Activated B cell treated with CpG ODN at 0.5 μM for 24 hours (primary cell): ENCODE measurements at regions of chr9 and their contacts with region 1.

Region 1: GRCh38 chr9:131125128-131126058 is at the start of gene NUP214:
- DNase-seq: peak; percentile 100
- ATAC-seq: peak; percentile 99
- H3K4me3 Mint-ChIP-seq: peak within 1 kb of the TSS; percentile 98
- H3K27ac Mint-ChIP-seq: peak within 1 kb of the TSS; percentile 98
- H3K4me1 Mint-ChIP-seq: peaks cover 29% of the 10 kb centered on the region
- H3K27me3 Mint-ChIP-seq: no peaks in the 10 kb centered on the region
- CTCF ChIP-seq: no peak
- total RNA-seq, gene NUP214: 72.2 and 90.9 TPM in 2 replicates

Region 2: DNA sequence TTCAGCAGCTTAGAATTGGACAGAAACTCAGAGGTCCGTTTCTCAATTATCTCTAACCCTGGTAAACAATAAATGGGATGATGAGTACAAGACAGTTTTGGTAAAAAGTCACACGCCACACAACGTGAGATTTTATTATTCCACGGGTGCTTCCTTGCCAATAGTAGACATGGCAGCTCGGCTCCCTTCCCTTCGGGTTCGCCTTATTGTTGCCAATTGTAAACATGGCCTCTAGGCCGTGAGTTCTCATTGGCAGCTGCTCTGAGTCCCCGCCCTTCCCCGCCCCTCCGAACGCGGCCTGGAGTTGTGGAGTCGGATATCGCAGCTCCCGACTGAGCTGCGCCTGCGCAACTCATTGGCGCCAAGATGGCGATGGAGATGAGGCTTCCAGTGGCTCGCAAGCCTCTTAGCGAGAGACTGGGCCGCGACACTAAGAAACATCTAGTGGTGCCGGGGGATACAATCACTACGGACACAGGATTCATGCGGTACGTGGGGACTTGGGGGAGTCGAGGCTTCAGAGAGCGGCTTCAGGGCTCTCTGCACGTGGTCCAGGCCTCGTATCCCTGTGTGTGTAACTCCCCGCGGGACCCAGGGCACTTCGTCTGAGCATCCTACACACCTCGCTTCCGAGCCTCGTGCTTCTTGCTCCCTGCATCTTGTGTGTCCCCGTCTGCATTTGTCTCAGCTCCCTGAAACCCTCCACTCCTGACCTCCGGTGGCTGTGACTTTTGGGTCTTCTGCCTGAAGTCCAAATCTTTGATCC is 431.8 kb before region 1 on chr9 and contains the start of gene EXOSC2:
- CTCF ChIA-PET with region 1: no interaction called
- POLR2A ChIA-PET with region 1: interaction called, 6 read pairs
- intact Hi-C with region 1: loop called (anchors 5 kb)
- DNase-seq: peak; percentile 79
- ATAC-seq: peak; percentile 99
- H3K4me3 Mint-ChIP-seq: peak within 1 kb of the TSS; percentile 94
- H3K27ac Mint-ChIP-seq: peak within 1 kb of the TSS; percentile 93
- H3K4me1 Mint-ChIP-seq: peaks cover 30% of the 10 kb centered on the region
- H3K27me3 Mint-ChIP-seq: no peaks in the 10 kb centered on the region
- CTCF ChIP-seq: no peak
- total RNA-seq, gene EXOSC2: 49.6 and 54.8 TPM in 2 replicates

Region 3: DNA sequence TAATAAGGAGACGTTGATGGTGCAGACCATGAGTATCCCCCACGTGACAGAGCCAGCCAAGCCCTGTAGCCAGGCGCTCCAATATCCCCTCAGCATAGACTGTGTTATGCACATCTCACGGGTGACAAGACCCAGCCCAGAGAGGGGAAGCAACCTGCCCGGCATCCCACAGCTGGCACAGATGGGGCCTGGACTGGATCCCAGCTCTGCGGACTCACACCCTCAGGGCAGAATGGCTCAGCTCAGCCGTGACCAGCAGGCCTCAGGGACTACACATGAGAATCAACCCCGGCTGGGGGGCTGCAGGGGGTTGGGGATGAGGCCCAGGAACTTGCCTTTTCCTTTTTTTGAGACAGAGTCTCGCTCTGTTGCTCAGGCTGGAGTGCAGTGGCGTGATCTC is 198.1 kb before region 1 on chr9:
- CTCF ChIA-PET with region 1: no interaction called
- POLR2A ChIA-PET with region 1: no interaction called
- intact Hi-C with region 1: no loop called
- DNase-seq: no peak
- ATAC-seq: no peak
- H3K4me3 Mint-ChIP-seq: no peak overlapping the region
- H3K27ac Mint-ChIP-seq: no peak overlapping the region
- H3K4me1 Mint-ChIP-seq: peaks cover 21% of the 10 kb centered on the region
- H3K27me3 Mint-ChIP-seq: peaks cover 37% of the 10 kb centered on the region
- CTCF ChIP-seq: no peak

Region 4: DNA sequence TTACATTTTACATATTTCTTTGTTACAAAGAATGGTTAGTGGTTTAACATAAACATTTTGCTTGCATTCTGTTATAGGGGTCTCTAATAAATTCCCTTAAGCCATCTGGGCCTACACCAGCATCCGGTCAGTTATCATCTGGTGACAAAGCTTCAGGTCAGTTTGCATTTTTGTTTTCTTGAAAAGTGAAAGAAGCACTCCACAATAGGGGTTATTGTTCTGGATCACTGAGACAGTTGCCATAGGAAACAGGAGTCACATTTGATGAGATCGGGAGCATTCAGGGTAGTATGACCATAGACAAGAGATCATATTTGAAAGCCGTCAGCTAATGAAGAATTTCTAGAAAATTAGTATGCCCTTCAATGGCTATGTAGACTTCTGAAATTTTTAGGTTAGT is 63.6 kb after region 1 on chr9:
- CTCF ChIA-PET with region 1: no interaction called
- POLR2A ChIA-PET with region 1: no interaction called
- intact Hi-C with region 1: no loop called
- DNase-seq: no peak
- ATAC-seq: no peak
- H3K4me3 Mint-ChIP-seq: no peak overlapping the region
- H3K27ac Mint-ChIP-seq: no peak overlapping the region
- H3K4me1 Mint-ChIP-seq: no peaks in the 10 kb centered on the region
- H3K27me3 Mint-ChIP-seq: no peaks in the 10 kb centered on the region
- CTCF ChIP-seq: no peak

Region 5: DNA sequence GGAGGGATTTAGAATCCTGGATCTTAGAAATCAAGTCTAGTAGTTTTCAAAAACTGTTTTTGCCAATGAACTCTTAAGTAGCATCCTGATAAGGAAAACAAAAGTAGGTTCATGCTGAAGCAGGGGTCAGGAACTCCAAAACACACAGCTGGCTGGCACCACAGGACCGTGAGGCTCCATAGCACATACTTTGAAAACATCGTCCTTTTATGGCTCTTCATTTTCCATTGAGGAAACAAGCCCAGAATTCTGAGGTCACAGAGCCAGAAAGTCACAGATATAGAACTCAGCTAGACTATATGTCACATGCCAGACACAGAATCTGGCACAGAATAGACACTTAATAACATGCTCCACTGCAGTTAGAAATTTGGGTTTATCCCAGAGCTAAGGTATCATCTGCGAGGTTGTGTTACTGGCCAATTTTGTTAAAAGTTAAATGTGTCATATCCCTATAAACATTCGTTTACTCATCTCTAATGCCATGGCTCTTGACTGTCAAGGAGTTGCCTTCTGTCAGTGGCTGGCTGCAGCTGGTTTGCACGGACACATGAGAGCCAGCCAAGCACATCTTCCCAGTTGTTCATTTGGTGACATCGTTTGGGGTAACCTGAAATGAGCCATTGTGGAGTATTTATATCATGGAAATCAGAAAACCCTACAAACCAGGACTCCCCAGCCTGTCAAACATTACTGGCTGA is 92.1 kb after region 1 on chr9:
- CTCF ChIA-PET with region 1: no interaction called
- POLR2A ChIA-PET with region 1: interaction called, 10 read pairs
- intact Hi-C with region 1: no loop called
- DNase-seq: no peak
- ATAC-seq: no peak
- H3K4me3 Mint-ChIP-seq: no peak overlapping the region
- H3K27ac Mint-ChIP-seq: no peak overlapping the region
- H3K4me1 Mint-ChIP-seq: no peaks in the 10 kb centered on the region
- H3K27me3 Mint-ChIP-seq: no peaks in the 10 kb centered on the region
- CTCF ChIP-seq: no peak

Region 6: GRCh38 chr9:131277910-131278701 is 152.7 kb after region 1 on chr9:
- CTCF ChIA-PET with region 1: no interaction called
- POLR2A ChIA-PET with region 1: interaction called, 4 read pairs
- intact Hi-C with region 1: loop called (anchors 2 kb)
- DNase-seq: peak; percentile 48
- ATAC-seq: peak; percentile 48
- H3K4me3 Mint-ChIP-seq: peak overlapping the region; percentile 91
- H3K27ac Mint-ChIP-seq: peak overlapping the region; percentile 80
- H3K4me1 Mint-ChIP-seq: peaks cover 37% of the 10 kb centered on the region
- H3K27me3 Mint-ChIP-seq: peaks cover 12% of the 10 kb centered on the region
- CTCF ChIP-seq: no peak

Region 7: DNA sequence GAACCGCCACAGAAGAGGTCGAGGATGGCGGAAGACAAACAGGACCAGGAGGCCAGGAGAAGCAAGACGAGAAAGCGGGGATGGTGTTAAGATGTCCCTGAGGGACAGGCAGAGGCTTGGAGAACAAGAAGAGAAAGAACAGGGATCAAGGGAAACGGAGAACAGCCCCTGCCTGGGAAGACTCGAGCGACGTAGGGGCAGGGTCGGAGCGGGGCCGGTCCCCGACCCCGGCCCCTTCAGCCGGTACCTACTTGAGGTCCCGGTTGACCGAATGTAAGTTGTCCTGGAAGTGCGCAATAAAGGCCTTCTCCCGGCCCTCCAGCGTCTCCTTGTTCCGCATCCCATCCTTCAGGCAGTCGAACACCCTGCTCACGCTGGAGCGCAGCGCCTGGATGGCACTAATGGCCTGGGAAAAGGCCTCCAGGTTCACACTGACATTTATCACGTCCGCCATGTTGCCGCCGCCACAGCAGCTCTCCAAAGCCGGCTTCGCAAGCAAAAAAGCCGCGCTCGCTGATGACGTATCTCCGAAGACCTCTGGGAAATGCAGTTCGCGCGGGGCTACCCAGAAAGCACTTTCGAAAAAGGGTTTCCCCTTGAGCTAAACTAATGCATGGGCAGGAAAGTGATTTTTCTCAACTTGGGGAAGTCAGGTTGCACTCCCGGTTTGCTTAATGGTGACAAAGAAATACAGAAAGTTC is 954.1 kb after region 1 on chr9 and contains the start of gene MED27:
- CTCF ChIA-PET with region 1: no interaction called
- POLR2A ChIA-PET with region 1: no interaction called
- intact Hi-C with region 1: loop called (anchors 2 kb)
- DNase-seq: peak; percentile 88
- ATAC-seq: peak; percentile 99
- H3K4me3 Mint-ChIP-seq: peak within 1 kb of the TSS; percentile 93
- H3K27ac Mint-ChIP-seq: peak within 1 kb of the TSS; percentile 81
- H3K4me1 Mint-ChIP-seq: peaks cover 30% of the 10 kb centered on the region
- H3K27me3 Mint-ChIP-seq: peaks cover 7% of the 10 kb centered on the region
- CTCF ChIP-seq: no peak
- total RNA-seq, gene MED27: 18.8 and 24.5 TPM in 2 replicates